ENCODE measurements at regions of chr20 and their contacts with region 1.

Region 1: GRCh38 chr20:17431621-17432364 is 99.4 kb downstream of the BFSP1 start:
- DNase-seq: no peak
- H3K4me3 ChIP-seq: no peak overlapping the region
- CTCF ChIP-seq: peak; percentile 73

Region 2: DNA sequence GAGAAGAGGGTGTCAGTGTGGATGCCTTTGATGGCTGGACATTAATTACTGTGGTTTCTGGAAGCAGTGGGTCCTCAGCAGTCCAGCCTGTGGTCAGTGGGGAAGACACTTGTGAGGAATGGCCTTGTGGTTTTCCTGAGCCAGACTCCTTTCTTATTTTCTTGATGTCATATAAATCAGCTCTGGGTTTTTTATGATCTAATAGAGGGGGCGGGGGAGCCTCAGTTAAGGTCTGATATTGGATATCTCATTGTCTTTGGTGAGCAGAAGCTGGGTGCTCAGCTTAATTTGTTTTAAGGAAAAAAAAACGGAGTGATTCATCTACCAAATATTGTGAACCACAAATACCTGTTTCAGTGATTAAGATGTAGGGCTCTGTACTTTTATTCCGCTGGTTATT is 621.6 kb before region 1 on chr20:
- CTCF ChIA-PET with region 1: interaction called, 563 read pairs
- POLR2A ChIA-PET with region 1: no interaction called
- DNase-seq: no peak
- H3K4me3 ChIP-seq: no peak overlapping the region
- CTCF ChIP-seq: no peak

Region 3: DNA sequence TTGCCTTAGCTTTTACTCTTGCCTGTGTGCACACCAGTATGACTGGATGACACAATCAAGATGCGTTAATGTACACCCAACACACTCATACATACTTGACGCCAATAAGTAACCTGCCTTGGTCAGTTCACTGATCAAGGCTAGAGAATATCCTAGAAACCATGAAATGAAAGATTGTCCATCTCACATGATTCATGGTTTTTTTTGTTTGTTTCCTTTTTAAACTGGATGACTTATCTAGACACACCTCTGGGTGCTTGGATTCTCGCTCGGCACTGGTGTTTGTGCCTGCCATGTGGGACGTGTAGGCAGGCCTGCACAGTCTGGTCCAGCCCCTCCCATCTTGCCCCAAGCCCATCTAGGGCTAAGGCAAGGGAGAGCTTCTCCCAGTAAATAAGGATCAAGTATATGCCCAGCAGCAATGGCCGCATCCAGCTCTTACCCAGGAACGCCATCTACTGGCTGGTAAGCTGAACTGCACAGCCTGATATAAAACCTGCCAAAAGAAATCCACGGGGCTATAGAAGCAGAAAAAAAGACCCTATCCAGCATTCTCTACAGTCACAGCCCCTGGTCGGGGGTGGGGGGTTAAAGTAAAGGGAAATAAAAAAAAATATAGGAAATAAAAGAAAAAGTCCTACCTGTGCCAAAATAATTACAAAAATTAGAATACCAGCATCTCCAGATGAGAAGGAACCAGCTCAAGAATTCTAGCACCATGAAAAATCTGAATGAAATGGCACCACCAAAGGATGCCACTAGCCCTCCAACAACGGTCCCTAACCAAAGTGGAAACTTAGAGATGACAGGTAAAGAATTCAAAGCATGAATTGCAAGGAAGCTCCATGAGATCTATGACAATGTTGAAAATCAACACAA is 610.3 kb before region 1 on chr20:
- CTCF ChIA-PET with region 1: interaction called, 17 read pairs
- POLR2A ChIA-PET with region 1: no interaction called
- DNase-seq: no peak
- H3K4me3 ChIP-seq: no peak overlapping the region
- CTCF ChIP-seq: peak; percentile 79

Region 4: GRCh38 chr20:17327185-17328148 is 104.3 kb before region 1 on chr20:
- CTCF ChIA-PET with region 1: no interaction called
- POLR2A ChIA-PET with region 1: no interaction called
- DNase-seq: no peak
- H3K4me3 ChIP-seq: no peak overlapping the region
- CTCF ChIP-seq: no peak

Region 5: GRCh38 chr20:17421493-17421892 is 10.3 kb before region 1 on chr20:
- CTCF ChIA-PET with region 1: interaction called, 31 read pairs
- POLR2A ChIA-PET with region 1: no interaction called
- DNase-seq: no peak
- H3K4me3 ChIP-seq: no peak overlapping the region
- CTCF ChIP-seq: no peak

Region 6: GRCh38 chr20:17682103-17682888 is 250.5 kb after region 1 on chr20 and contains the start of gene RRBP1:
- CTCF ChIA-PET with region 1: no interaction called
- POLR2A ChIA-PET with region 1: no interaction called
- DNase-seq: peak; percentile 78
- H3K4me3 ChIP-seq: peak within 1 kb of the TSS; percentile 80
- CTCF ChIP-seq: peak; percentile 69